Sigmoid colon (tissue), 7 donors: ENCODE measurements at regions of chrX and their contacts with region 1.

Region 1: DNA sequence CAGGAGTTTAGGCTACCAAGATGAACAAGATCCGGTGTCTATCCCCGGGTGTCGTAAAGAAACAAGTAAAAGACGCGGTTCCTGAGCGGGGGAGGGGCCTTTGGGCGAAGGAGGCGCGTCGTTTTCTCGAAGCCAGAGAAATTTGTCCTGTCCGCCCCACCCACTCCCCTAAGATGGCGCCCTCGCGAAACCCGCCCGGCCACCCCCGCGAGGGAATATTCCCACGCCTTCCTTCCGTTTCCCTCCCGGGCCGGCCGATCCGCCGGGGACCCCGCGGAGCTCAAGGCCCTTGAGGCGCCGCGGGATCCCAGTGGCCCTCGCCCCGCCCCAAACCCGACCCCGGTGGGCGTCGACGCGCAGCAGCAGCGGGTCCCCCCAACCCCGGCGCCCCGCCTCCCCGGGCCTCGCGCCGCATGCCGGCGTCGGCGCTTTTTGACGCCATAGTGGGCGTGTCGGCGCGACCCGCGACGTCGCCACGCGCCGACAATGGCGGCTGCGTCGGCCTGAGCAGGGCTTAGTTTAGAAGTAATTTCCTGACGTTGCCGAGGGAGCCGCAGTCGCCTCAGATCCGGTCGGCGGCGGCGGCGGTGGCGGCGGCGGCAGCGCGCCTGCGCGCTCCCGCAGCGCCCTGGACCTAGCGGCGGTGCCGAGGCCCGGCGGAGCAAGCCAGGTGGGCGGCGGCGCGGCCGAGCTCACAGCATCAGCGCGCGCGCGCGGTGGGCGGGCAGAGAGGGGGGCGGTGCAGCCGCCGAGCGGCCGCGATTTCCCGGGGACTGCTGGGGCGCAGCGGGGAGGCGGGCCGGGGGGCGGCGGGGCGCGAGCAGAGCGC is at the start of gene HTATSF1:
- DNase-seq: peak; percentile 93
- H3K4me3 ChIP-seq: peak within 1 kb of the TSS; percentile 52 to 73 (median 65)
- H3K27ac ChIP-seq: peak within 1 kb of the TSS; percentile 90 to 95 (median 93)
- H3K4me1 ChIP-seq: peaks cover 0 to 12% (median 3%) of the 10 kb centered on the region in 4 donors
- H3K27me3 ChIP-seq: no peaks in the 10 kb centered on the region
- CTCF ChIP-seq: no peak
- EP300 ChIP-seq: no peak
- POLR2A ChIP-seq: no peak
- total RNA-seq, gene HTATSF1: 47.1 to 62.4 (median 55.0) TPM

Region 2: GRCh38 chrX:135521405-135522189 is 975.4 kb before region 1 on chrX:
- intact Hi-C with region 1: loop called (anchors 5 kb)
- DNase-seq: peak; percentile 94
- H3K4me3 ChIP-seq: peak overlapping the region; percentile 62 to 80 (median 68)
- H3K27ac ChIP-seq: peak overlapping the region; percentile 91 to 96 (median 94)
- H3K4me1 ChIP-seq: peaks cover 0 to 5% (median 0%) of the 10 kb centered on the region in 4 donors
- H3K27me3 ChIP-seq: no peaks in the 10 kb centered on the region
- CTCF ChIP-seq: no peak
- EP300 ChIP-seq: no peak
- POLR2A ChIP-seq: peak; percentile 22 to 31

Region 3: DNA sequence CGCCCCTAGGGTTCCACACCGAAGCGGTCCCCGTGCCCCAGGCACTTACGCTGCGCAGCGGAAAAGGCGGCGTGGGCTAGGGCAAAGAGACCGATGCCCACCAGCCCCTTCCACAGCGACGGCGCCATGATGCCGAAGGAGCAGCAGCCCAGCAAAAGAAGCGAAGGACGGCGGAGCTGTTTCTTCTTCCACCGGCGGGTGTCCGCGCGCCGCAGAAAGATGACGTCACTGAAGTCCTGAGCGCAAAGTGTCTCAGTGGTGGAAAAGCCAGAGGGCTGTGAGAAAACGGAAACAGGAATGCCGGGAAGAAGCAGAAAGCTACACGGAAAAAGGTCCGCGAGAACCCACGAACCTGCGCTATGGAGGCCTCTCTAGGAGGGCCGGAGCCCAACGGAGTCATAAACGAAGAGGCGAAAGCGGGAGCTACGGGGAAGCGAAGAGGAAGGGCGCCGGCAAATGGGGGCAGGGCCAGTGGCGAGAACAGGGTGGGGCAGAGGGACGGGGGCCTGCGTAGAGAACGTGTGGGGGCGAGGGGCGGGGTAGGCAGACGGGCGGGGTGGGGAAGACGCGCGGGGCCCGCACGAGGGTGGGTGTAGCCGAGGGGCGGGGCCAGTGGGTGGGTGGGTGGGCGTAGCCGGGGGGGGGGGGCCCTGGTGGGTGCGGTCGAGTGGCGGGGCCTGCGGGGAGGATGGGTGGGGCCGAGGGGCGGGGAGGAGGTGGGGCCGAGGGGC is 523.3 kb before region 1 on chrX and contains the start of gene MMGT1:
- intact Hi-C with region 1: loop called (anchors 5 kb)
- DNase-seq: peak; percentile 94
- H3K4me3 ChIP-seq: peak within 1 kb of the TSS; percentile 53 to 66 (median 63)
- H3K27ac ChIP-seq: peak within 1 kb of the TSS; percentile 88 to 93 (median 92)
- H3K4me1 ChIP-seq: peaks cover 0 to 16% (median 12%) of the 10 kb centered on the region in 4 donors
- H3K27me3 ChIP-seq: no peaks in the 10 kb centered on the region
- CTCF ChIP-seq: no peak
- EP300 ChIP-seq: no peak
- POLR2A ChIP-seq: peak; percentile 9 to 21
- total RNA-seq, gene MMGT1: 27.7 to 35.1 (median 32.5) TPM

Region 4: GRCh38 chrX:136251041-136251991 is 245.7 kb before region 1 on chrX and contains the start of gene MAP7D3:
- intact Hi-C with region 1: loop called (anchors 10 kb)
- DNase-seq: peak; percentile 82
- H3K4me3 ChIP-seq: peak within 1 kb of the TSS; percentile 64 to 79 (median 74)
- H3K27ac ChIP-seq: peak within 1 kb of the TSS; percentile 86 to 91 (median 89)
- H3K4me1 ChIP-seq: peaks cover 0 to 7% (median 0%) of the 10 kb centered on the region in 4 donors
- H3K27me3 ChIP-seq: no peaks in the 10 kb centered on the region
- CTCF ChIP-seq: no peak
- EP300 ChIP-seq: no peak
- POLR2A ChIP-seq: peak; percentile 18
- total RNA-seq, gene MAP7D3: 11.3 to 21.0 (median 14.2) TPM

Region 5: DNA sequence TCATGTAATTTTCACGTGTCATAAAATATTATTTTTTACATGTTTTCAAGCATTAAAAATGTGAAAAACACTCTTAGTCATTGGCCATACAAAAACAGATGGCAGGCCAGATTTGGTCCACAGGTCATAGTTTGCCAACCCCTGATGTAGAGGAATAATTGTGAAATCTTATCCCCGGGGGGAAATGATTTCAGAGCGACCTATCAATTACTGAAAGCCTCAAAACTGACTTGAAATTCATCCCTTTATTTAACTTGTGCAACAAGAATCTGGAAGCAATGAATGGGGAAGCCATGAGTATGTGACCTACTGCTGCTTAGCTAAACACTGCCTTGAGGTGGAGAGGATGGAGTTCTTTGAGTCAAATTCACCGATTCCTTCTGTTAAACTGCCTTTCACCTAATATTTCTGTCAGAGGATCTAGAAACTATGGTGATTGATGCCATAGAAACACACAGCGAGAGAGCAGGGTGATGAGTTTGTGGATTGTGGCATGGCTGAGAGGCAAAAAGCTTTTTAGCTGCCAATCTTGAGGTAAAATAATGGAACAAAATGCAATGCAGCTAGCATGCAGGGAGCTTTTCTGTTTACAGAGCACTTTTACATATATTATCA is 39.6 kb before region 1 on chrX:
- intact Hi-C with region 1: no loop called
- DNase-seq: no peak
- H3K4me3 ChIP-seq: no peak overlapping the region
- H3K27ac ChIP-seq: no peak overlapping the region
- H3K4me1 ChIP-seq: no peaks in the 10 kb centered on the region
- H3K27me3 ChIP-seq: no peaks in the 10 kb centered on the region
- CTCF ChIP-seq: no peak
- EP300 ChIP-seq: no peak
- POLR2A ChIP-seq: no peak

Region 6: GRCh38 chrX:136525738-136526606 is 29.0 kb after region 1 on chrX:
- intact Hi-C with region 1: loop called (anchors 2 kb)
- DNase-seq: peak; percentile 95
- H3K4me3 ChIP-seq: no peak overlapping the region
- H3K27ac ChIP-seq: peak overlapping the region; percentile 55 to 70 (median 67)
- H3K4me1 ChIP-seq: peaks cover 0 to 19% (median 11%) of the 10 kb centered on the region in 4 donors
- H3K27me3 ChIP-seq: no peaks in the 10 kb centered on the region
- CTCF ChIP-seq: no peak
- EP300 ChIP-seq: no peak
- POLR2A ChIP-seq: no peak

Region 7: DNA sequence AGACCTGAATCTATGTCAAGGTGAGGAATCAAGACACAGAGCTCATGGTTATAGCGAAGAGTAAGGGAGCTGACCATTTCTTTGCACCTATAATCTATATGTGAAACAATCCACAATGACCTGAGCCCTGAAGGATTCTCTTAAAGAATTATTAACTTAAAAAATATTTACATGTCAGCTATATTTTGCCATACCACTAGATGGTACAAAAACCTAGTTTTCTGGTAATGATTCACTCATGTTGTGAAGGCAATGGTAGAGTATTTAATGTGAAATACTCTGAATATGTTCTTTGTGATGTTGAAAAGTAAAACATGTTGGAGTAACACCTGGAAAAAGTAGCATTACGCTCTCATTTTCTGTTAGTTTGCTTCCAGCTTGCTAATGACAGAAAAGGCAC is 75.0 kb after region 1 on chrX:
- intact Hi-C with region 1: no loop called
- DNase-seq: no peak
- H3K4me3 ChIP-seq: no peak overlapping the region
- H3K27ac ChIP-seq: no peak overlapping the region
- H3K4me1 ChIP-seq: no peaks in the 10 kb centered on the region
- H3K27me3 ChIP-seq: no peaks in the 10 kb centered on the region
- CTCF ChIP-seq: no peak
- EP300 ChIP-seq: no peak
- POLR2A ChIP-seq: no peak